Sigmoid colon (tissue), 7 donors: ENCODE measurements at regions of chr21 and their contacts with region 1.

Region 1: GRCh38 chr21:14046401-14046800 is 164.4 kb downstream of the LIPI start:
- DNase-seq: no peak
- H3K4me3 ChIP-seq: no peak overlapping the region
- H3K27ac ChIP-seq: no peak overlapping the region
- H3K4me1 ChIP-seq: peaks cover 0 to 23% (median 22%) of the 10 kb centered on the region in 4 donors
- H3K27me3 ChIP-seq: no peaks in the 10 kb centered on the region
- CTCF ChIP-seq: no peak
- EP300 ChIP-seq: no peak
- POLR2A ChIP-seq: no peak

Region 2: DNA sequence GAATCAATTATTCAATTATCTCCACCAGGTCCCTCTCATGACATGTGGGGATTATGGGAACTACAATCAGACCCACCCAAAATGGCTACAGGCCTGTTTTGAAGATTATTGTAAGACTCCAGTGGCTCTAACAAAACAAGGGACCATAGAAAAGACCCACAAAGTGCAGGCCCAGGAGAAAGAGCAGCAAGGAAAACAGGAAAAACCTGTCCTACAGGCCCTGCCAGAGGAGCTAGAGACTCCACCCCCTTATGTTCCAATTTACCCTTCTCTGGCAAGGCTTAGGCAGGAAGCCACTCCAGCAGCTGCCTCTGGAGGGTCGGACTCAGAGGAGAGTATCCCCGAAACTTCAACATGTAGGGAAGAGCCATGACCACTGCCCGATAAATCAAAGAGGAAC is 67.8 kb after region 1 on chr21:
- intact Hi-C with region 1: loop called (anchors 10 kb)
- DNase-seq: no peak
- H3K4me3 ChIP-seq: no peak overlapping the region
- H3K27ac ChIP-seq: no peak overlapping the region
- H3K4me1 ChIP-seq: no peaks in the 10 kb centered on the region
- H3K27me3 ChIP-seq: no peaks in the 10 kb centered on the region
- CTCF ChIP-seq: no peak
- EP300 ChIP-seq: no peak
- POLR2A ChIP-seq: no peak

Region 3: DNA sequence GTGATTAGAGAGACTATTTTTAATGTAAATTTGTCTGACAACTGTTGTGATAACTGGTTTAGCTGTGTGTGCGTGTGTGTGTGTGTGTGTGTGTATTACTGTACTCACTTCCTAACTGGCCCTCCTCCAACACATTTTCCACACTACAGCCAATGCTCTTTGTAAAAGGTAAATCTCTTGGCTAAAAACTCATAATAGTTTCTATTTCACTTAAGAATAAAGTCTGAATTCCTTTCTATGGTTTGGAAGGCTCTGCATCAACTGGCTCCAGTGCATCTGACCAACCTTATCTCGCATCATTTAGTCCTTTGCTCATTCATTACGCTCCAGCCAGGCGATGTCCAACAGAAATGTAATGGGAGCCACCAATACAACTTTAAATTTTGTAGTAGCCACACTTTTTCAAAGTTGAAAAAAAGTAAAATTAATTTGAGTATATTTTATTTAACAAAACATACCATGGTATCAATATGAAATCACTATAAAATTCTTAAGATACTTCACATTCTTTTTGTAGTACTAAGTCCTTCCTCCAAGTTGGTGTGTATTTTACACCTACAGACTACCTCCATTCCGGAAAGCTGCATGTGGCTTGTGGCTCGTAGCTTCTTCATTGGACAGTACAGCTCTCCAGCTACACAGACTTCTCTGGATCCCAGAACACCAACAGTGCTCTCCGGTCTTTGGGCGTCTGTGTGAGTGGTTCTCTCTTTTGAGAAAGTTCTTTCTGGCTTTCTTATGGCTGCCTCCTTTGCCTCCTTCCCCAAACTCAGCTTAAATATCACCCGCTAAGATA is 949.5 kb after region 1 on chr21:
- intact Hi-C with region 1: loop called (anchors 10 kb)
- DNase-seq: no peak
- H3K4me3 ChIP-seq: no peak overlapping the region
- H3K27ac ChIP-seq: no peak overlapping the region
- H3K4me1 ChIP-seq: peaks cover 0 to 38% (median 25%) of the 10 kb centered on the region in 4 donors
- H3K27me3 ChIP-seq: no peaks in the 10 kb centered on the region
- CTCF ChIP-seq: no peak
- EP300 ChIP-seq: no peak
- POLR2A ChIP-seq: no peak